ENCODE measurements at regions of chr11 and their contacts with region 1.

Region 1: GRCh38 chr11:134164490-134165370 is 59.0 kb downstream of the NCAPD3 start:
- DNase-seq: no peak
- H3K4me3 ChIP-seq: no peak overlapping the region
- H3K27ac ChIP-seq: no peak overlapping the region
- H3K4me1 ChIP-seq: no peaks in the 10 kb centered on the region
- H3K27me3 ChIP-seq: no peaks in the 10 kb centered on the region
- CTCF ChIP-seq: no peak

Region 2: DNA sequence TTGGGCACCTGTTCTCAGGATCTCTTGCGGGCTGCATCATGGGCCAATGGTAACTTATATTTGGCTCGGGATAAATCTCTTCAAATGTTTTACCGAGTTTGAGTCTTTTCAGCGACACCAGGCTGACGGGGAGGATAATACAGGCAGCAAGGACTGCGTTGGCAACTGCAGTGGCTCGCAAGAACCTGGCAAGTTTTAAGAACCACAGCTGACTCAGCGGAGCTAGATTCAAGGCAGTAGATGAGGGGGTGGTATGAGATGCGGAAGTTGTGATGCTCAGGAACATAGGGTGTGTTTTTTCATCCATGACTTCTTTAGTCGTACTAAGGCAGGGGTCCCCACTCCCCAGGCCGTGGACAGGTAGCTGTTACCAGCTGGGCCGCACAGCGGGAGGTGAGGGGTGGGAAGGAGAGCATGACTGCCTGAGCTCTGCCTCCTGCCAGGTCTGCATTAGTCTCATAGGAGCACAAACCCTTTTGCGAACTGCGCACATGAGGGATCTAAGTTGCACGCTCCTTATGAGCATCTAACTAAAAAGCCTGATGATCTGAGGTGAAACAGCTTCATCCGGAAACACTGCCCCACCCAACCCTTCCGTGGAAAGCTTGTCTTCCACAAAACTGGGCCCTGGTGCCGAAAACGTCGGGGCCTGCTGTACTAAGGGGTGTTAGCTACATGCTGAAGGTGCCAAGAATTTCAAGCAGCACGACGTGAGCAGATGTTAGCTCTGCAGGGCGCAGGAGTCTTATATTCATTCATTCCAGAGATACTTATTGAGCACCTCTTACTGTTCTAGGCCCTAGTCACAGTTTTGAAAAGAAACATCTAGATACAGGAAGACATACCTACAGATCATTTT is 102.2 kb before region 1 on chr11:
- CTCF ChIA-PET with region 1: no interaction called
- dilution Hi-C with region 1: loop called (anchors 5 kb)
- in situ Hi-C with region 1: no loop called
- intact Hi-C with region 1: no loop called
- DNase-seq: no peak
- H3K4me3 ChIP-seq: no peak overlapping the region
- H3K27ac ChIP-seq: no peak overlapping the region
- H3K4me1 ChIP-seq: no peaks in the 10 kb centered on the region
- H3K27me3 ChIP-seq: no peaks in the 10 kb centered on the region
- CTCF ChIP-seq: no peak

Region 3: GRCh38 chr11:134098566-134099184 is 66.1 kb before region 1 on chr11:
- CTCF ChIA-PET with region 1: no interaction called
- dilution Hi-C with region 1: loop called (anchors 5 kb)
- in situ Hi-C with region 1: no loop called
- intact Hi-C with region 1: no loop called
- DNase-seq: peak; percentile 11
- H3K4me3 ChIP-seq: no peak overlapping the region
- H3K27ac ChIP-seq: no peak overlapping the region
- H3K4me1 ChIP-seq: no peaks in the 10 kb centered on the region
- H3K27me3 ChIP-seq: no peaks in the 10 kb centered on the region
- CTCF ChIP-seq: peak in 1 of 2 donors; percentile 57